BJ (cell line): ENCODE measurements at regions of chr17 and their contacts with region 1.

Region 1: GRCh38 chr17:40559954-40560591 is 5.2 kb downstream of the CCR7 start:
- DNase-seq: peak; percentile 62
- H3K4me3 ChIP-seq: no peak overlapping the region
- H3K27me3 ChIP-seq: peaks cover 3% of the 10 kb centered on the region
- CTCF ChIP-seq: peak; percentile 99

Region 2: DNA sequence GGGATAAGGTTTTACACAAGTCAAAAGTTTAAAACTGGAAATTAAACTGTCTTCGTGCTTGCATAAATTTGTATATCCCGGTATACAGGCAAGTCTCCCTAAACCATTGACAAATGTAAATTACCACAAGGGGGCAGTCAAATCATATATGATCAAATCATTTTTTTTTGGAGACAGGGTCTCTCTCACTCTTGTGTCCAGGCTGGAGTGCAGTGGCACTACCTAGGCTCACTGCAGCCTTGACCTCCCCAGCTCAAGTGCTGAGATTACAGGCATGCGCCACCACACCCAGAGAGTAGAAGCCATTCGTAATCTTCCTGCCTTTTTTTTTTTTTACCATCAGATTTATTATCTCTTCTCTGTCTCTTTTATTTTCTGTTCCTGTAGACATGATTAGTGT is 160.9 kb before region 1 on chr17:
- CTCF ChIA-PET with region 1: interaction called, 17 read pairs
- POLR2A ChIA-PET with region 1: no interaction called
- DNase-seq: peak; percentile 5
- H3K4me3 ChIP-seq: no peak overlapping the region
- H3K27me3 ChIP-seq: no peaks in the 10 kb centered on the region
- CTCF ChIP-seq: peak; percentile 58

Region 3: DNA sequence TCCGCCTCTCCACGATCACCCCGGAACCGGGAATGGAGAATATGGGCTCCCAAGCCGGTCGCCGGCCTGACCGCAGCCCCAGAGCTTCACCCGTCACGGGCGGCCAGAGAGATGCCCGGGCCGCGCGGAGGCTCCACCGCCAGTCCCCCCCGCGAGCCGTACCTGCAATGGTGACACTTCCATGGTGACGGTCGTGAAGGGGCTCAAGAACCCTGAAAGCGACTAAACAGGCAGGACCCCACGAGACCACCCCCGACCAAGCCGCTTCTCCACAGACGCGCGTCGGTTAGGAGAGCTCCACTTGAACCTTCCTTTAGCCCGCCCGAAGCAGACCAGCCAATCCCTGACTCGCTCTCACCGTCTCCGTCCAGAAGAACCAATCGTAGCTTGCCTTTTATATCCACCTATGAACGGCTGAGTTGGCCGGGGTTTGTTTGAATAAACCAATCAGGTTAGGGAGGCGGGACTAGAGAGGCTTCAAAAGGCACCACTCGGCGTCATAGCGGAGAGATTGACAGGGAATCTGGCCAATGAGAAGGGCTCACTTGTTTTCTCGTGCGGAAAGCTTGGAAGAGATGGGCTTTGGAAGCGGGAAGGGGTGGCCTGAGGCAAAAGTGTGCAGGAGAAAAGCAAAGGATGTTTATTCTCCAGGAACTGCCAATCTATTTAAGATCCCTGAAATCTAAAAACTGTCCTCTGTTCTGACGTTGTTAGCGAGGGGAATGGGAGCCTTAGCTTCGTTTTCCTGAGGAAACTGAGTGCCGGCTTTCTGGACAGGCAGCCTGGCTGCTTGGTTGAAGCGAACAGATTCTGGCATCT is 142.3 kb before region 1 on chr17 and contains the start of gene TOP2A:
- CTCF ChIA-PET with region 1: interaction called, 12 read pairs
- POLR2A ChIA-PET with region 1: interaction called, 3 read pairs
- DNase-seq: peak; percentile 99
- H3K4me3 ChIP-seq: peak within 1 kb of the TSS; percentile 56
- H3K27me3 ChIP-seq: no peaks in the 10 kb centered on the region
- CTCF ChIP-seq: no peak
- polyA plus RNA-seq, gene TOP2A: 31.8 and 69.6 TPM in 2 replicates

Region 4: DNA sequence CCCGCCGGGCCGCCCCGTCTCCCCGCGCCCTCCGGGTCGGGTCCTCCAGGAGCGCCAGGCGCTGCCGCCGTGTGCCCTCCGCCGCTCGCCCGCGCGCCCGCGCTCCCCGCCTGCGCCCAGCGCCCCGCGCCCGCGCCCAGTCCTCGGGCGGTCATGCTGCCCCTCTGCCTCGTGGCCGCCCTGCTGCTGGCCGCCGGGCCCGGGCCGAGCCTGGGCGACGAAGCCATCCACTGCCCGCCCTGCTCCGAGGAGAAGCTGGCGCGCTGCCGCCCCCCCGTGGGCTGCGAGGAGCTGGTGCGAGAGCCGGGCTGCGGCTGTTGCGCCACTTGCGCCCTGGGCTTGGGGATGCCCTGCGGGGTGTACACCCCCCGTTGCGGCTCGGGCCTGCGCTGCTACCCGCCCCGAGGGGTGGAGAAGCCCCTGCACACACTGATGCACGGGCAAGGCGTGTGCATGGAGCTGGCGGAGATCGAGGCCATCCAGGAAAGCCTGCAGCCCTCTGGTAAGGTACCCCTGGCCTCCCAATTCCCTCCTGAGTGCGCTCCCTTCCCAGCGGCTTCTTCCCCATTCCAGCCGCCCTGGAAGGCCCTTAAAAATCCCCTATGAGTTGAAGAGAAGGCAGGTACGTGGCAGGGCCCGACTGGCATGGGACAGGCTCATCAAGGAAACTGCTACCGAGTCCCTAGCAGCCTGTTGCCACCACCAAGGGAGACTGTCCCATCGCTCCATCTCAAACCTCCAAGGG is 116.3 kb before region 1 on chr17:
- CTCF ChIA-PET with region 1: interaction called, 85 read pairs
- POLR2A ChIA-PET with region 1: no interaction called
- DNase-seq: no peak
- H3K4me3 ChIP-seq: peak overlapping the region; percentile 95
- H3K27me3 ChIP-seq: no peaks in the 10 kb centered on the region
- CTCF ChIP-seq: peak; percentile 35

Region 5: DNA sequence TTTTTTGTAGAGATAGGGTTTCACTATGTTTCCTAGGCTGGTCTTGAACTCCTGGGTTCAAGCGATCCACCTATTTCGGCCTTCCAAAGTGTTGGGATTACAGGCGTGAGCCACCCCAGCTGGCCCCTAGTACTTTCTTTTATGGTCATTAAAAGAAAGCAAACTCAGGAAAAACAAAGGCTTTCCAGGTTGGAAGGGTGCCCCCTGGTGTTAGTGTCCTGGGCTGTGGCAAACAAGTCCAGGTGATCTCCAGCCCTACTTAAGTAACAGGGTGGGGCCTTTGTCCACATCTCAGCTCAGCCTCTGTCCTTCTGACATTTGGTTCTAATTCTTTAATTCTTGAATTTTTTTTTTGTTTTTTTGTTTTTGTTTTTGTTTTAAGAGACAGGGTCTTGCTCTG is 109.9 kb before region 1 on chr17:
- CTCF ChIA-PET with region 1: interaction called, 85 read pairs
- POLR2A ChIA-PET with region 1: no interaction called
- DNase-seq: no peak
- H3K4me3 ChIP-seq: no peak overlapping the region
- H3K27me3 ChIP-seq: no peaks in the 10 kb centered on the region
- CTCF ChIP-seq: peak; percentile 70

Region 6: DNA sequence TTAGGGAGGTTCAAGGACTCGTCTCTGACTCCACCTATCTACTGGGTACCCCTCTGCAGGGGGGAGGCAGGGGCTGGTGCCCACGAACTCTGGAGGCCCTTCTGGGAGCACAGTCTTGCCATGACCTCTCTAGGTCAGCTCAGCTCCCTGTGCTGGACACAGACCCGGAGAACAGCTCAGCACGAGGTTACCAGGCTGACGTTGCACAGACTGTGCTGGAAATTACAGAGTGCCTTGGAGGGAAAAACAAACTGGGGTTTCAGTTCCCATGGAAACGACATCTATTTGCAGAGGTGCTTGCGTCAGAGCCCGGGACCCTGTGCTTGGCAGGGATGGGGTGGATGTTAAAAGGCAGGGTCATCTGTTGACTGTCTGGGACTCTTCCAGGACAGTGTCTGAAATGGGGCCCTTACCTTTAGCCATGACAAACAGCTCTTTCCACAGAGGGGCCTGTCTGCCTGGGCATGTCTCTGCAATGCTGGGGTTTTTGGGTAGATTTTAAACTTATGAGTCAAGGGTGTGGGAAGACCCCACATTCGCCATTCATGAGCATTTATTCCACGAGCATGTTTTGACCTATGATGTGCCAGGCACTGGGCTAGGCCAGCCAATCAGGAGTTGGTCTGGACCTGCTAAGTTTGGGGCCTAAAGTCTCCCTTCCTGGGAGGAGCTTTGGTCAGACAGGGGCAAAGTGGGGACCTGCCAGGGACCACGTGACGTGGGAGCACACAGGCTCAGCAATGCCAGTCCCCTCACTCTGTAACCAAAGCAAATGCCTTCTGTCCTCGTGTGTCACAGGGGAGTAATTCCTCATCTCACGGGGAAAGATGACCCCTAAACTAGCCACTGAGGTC is 17.3 kb before region 1 on chr17:
- CTCF ChIA-PET with region 1: interaction called, 382 read pairs
- POLR2A ChIA-PET with region 1: interaction called, 3 read pairs
- DNase-seq: peak; percentile 84
- H3K4me3 ChIP-seq: no peak overlapping the region
- H3K27me3 ChIP-seq: no peaks in the 10 kb centered on the region
- CTCF ChIP-seq: no peak

Region 7: DNA sequence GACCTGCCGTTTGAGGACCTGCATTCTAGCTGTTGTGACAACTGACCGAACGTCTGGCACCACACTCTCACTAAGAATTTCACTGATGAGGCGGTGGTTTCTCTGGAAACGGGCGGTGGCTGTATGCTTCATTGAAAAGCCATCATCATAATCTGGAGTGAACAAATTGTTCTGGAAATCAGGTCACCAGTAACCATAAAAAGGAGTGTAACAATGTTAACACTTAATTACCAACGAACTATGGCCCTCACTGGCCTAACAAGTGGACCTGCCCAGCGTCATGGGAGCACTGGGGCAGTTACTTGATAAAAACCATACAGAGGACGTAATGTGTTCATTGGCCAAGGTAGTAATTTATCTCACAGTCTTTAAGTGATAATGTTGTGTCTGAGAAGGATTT is 72.1 kb after region 1 on chr17:
- CTCF ChIA-PET with region 1: no interaction called
- POLR2A ChIA-PET with region 1: no interaction called
- DNase-seq: no peak
- H3K4me3 ChIP-seq: no peak overlapping the region
- H3K27me3 ChIP-seq: no peaks in the 10 kb centered on the region
- CTCF ChIP-seq: no peak

Region 8: DNA sequence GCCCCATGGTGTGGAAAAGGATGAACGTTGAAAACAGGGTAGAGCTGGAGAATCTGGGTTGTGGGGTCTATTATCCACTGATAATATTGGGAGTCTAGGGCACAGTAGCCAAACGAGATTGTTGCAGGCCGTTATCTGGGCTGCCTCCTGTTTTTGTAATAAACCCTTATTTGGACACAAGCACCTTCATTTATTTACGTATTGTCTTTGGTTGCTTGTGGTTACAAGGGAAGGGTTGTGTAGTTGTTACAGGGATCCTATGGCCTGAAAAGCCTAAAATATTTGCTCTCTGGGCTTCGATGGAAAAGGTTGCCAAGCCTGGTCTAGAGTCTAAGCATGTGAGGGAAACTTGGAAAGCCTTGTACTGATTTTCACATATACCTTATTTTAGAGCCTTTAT is 91.9 kb after region 1 on chr17:
- CTCF ChIA-PET with region 1: no interaction called
- POLR2A ChIA-PET with region 1: no interaction called
- DNase-seq: no peak
- H3K4me3 ChIP-seq: no peak overlapping the region
- H3K27me3 ChIP-seq: no peaks in the 10 kb centered on the region
- CTCF ChIP-seq: no peak